ENCODE measurements at regions of chr3 and their contacts with region 1.

Region 1: DNA sequence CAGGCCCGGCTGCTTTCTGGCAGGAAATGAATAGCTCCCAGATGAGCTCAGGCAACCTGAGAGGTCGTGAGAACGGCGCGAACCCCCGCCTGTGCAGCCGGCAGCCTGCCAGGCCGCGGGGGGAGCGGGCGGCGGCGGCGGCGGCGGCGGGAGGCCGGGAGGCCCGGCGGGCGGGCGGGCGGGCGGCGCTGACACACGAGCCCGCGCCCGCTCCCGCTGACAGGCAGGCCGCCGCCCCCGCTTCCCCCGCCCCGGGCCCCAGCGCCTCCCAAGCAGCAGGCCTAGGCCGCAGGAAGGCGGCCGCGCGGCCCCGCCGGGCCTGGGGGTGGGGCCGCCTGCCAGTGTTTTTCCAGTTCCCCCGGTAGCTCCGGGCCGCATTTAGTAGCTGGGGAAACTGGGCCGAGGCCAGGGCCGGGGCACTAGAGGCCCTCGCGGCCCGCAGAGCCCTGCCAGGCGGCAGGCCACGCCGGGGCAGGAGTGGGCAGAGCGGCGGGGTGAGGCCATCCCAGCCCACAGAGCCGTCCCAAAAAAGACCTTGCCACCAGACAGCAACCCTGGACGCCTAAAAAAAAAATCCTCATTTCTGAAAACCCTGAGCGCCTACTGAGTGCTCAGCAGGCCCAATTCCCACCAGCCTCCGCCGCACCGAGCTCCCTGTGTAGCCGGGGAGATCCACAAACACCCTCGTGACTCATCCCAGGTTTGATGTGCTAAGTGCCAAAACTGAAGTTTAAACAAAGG is 5.6 kb downstream of the HES1 start:
- DNase-seq: peak; percentile 62

Region 2: DNA sequence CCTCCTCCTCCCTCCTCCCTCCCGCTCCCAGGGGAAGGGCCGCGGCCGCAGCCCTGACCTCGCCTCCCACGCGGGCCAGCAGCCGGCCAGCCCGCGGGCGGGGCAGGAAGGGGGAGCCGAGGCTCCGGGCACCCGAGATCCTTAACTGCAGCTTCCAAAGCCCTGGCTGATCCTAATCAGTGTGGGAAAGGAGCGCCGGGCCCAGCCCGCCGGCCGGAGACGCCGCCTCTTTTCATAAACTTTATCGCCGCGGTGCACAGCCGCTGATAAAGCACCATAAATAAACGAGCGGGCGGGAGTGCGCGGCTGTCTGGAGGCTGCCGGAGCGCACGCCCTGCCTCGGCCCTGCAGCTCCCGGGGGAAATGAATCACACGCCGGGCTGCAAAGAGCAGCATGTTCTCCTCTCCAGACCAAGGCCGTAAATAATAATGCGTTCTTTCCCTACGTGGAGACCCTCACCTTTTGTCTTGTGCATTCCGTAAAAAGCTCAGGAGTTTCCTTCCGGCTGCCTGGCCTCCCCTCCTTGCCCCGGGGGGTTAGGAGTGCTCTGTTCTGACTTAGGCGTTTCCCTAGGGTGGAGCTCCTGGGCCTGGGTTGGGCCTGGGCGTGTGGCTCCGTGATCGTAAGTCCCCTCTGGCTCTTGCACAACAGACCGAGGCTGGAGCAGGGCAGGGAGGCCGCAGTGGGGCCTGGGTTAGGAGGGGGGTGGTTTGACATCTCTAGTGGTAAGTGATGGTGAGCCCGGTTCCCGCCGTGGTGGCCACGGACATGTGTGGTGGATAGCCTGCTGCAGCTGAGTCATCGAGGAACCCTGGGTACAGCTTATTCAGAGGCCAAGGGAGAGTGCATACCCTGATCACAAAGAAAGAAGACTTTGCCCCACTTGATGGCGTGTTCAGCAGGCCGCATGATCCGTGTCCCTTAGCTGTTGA is 138.2 kb before region 1 on chr3:
- CTCF ChIA-PET with region 1: interaction called, 6 read pairs
- POLR2A ChIA-PET with region 1: interaction called, 43 read pairs
- DNase-seq: peak; percentile 71

Region 3: DNA sequence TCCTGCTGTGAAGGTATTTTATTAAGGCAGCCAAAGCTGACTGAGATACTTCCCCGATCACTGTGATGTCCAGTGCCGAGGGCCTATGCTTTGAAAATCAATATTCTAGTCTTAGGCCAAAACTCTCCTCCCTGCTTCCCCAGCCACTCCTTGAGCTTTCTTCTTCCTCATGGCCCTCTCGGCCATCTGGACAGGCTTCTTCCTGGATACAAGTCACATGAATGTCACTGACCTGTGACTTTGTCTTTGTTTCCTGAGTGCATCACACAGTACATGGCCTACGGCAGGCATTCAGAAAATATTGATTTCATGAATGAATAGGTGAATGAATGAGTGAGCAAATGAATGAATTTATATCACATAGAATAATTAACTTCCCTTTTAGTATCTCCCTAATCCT is 30.2 kb before region 1 on chr3:
- CTCF ChIA-PET with region 1: no interaction called
- POLR2A ChIA-PET with region 1: no interaction called
- DNase-seq: no peak

Region 4: DNA sequence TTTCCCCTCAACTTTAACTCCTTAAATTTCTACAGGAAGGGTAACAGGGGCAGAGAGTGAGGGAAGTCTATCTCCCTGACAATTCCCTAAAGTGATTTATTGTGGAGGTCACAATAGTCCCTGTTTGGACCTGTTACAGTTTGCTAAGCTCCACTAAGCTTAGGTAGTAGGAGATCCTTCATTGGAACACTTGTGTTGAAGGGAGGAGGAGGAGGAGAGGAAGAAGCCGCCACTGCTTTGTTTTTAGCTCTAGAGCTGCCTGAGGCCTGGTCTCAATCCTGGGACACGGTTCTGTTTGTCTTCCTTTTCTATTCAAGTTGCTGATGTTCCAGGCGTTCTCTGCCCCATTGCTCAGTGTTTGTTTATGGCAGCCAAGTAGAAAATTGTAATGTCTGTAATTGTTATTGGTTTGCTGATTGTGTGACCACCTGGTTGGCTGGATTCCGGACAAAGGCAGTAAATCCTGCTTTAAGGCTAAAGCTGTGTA is 42.7 kb after region 1 on chr3:
- CTCF ChIA-PET with region 1: no interaction called
- POLR2A ChIA-PET with region 1: no interaction called
- DNase-seq: no peak

Region 5: GRCh38 chr3:194315088-194315964 is 173.7 kb after region 1 on chr3:
- CTCF ChIA-PET with region 1: interaction called, 25 read pairs
- POLR2A ChIA-PET with region 1: interaction called, 41 read pairs
- DNase-seq: peak; percentile 84

Measured in HEK293T (cell line).